ENCODE measurements at regions of chr11 and their contacts with region 1.

Region 1: GRCh38 chr11:41943656-41944055 is 484.2 kb upstream of the LRRC4C start:
- DNase-seq: no peak
- ATAC-seq: no peak
- H3K4me3 ChIP-seq: no peak overlapping the region
- H3K27ac ChIP-seq: no peak overlapping the region
- H3K4me1 ChIP-seq: no peaks in the 10 kb centered on the region
- H3K27me3 ChIP-seq: no peaks in the 10 kb centered on the region

Region 2: DNA sequence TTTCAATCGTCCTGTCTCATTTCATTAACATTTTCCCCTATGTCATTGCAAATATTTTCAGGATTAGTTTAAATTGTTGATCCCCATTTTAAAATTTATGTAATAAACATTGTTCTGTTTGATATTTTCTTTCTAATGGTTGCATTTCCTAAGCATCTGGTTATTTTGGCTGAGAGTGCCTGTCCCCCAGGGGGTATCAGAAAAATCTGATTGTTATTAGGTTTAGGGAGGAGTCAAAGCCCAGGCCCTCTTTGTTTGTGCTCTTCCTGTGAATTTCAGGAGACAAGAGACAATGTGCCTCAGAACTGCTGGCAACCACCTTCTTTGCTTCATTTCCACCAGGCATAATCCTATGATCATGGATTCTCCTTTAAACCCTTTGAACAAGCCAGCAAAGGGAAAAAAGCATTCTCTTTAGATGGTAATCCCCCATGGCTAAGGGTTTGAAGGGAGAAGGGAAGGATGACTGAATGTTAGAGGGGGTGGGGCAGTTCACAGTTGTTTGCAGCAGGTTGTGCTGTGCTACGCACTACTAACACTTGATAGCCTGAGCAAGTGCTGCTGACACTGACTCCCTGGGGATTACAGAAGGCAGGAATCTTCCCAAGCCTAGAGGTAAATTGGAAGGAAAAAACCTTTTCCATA is 21.8 kb before region 1 on chr11:
- intact Hi-C with region 1: loop called in 1 of 4 experiments (anchors 2 kb)
- DNase-seq: no peak
- ATAC-seq: no peak
- H3K4me3 ChIP-seq: no peak overlapping the region
- H3K27ac ChIP-seq: no peak overlapping the region
- H3K4me1 ChIP-seq: no peaks in the 10 kb centered on the region
- H3K27me3 ChIP-seq: no peaks in the 10 kb centered on the region

Region 3: GRCh38 chr11:42066113-42066512 is 122.5 kb after region 1 on chr11:
- intact Hi-C with region 1: no loop called
- DNase-seq: peak; percentile 20 to 57 (median 42)
- ATAC-seq: peak in 1 of 2 donors; percentile 23
- H3K4me3 ChIP-seq: no peak overlapping the region
- H3K27ac ChIP-seq: no peak overlapping the region
- H3K4me1 ChIP-seq: no peaks in the 10 kb centered on the region
- H3K27me3 ChIP-seq: no peaks in the 10 kb centered on the region